PC-9 (cell line): ENCODE measurements at regions of chr5 and their contacts with region 1.

Region 1: GRCh38 chr5:16690243-16690852 is 73.6 kb upstream of the RETREG1 start:
- DNase-seq: peak in 1 of 2 experiments; percentile 66
- H3K4me3 ChIP-seq: no peak overlapping the region
- H3K27ac ChIP-seq: no peak overlapping the region
- H3K4me1 ChIP-seq: no peaks in the 10 kb centered on the region
- H3K27me3 ChIP-seq: no peaks in the 10 kb centered on the region
- CTCF ChIP-seq: peak; percentile 85

Region 2: GRCh38 chr5:16776611-16777251 is 86.4 kb after region 1 on chr5:
- CTCF ChIA-PET with region 1: no interaction called
- POLR2A ChIA-PET with region 1: no interaction called
- intact Hi-C with region 1: loop called (anchors 5 kb)
- DNase-seq: no peak
- H3K4me3 ChIP-seq: no peak overlapping the region
- H3K27ac ChIP-seq: no peak overlapping the region
- H3K4me1 ChIP-seq: no peaks in the 10 kb centered on the region
- H3K27me3 ChIP-seq: no peaks in the 10 kb centered on the region
- CTCF ChIP-seq: no peak